HepG2 (cell line): ENCODE measurements at regions of chr10 and their contacts with region 1.

Region 1: DNA sequence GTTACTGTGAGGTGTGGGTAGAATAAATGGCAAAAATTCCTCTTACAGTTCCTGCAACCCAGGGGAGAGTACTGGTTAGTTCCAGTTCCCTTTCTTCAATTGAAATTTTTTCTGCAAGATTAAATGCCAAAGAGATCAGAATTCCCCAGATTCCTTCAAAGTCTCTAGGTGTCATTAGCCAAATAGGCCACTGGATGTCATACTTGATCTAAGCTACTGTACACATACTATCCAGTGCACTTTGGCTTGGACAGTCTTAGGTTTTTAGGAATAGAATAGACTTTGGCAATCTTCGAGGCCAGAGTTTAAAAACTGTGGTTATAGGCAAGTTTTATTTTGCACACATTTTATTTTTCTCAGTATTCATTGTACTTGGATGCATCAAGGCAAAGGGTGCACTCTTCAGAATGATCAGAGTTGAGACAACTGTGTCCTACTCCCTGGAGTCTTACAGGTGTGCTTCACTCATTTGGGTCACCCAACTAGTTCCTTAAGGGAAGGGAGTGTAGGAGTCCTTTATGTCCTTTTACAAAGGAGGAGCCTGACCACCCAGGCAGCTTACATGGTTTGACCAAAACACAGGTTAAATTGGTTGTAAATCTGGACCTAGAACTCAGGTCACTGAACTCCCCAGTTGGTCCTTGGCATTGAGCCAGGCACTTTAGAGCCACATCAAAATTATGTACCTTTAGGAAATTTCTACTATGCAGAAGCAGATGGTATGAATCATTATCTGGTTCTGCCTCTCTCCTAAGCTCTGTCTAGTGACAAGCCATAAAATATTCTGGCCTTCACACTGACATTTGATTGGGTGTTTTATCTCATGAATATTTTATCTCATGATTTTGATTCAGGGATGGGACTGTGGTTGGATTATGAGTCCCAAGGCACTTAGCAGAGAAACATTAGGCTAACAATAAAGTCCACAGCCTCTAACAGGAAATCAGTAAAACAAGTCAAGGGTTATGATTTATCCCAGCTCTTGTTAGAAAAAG is 49.5 kb downstream of the ASAH2B start:
- DNase-seq: peak; percentile 55
- ATAC-seq: peak; percentile 98
- H3K4me3 ChIP-seq: no peak overlapping the region
- H3K27ac ChIP-seq: no peak overlapping the region
- H3K4me1 ChIP-seq: peaks cover 22% of the 10 kb centered on the region
- H3K27me3 ChIP-seq: no peaks in the 10 kb centered on the region
- CTCF ChIP-seq: peak; percentile 81
- EP300 ChIP-seq: no peak
- POLR2A ChIP-seq: no peak
- RAD21 ChIP-seq: peak; percentile 76

Region 2: DNA sequence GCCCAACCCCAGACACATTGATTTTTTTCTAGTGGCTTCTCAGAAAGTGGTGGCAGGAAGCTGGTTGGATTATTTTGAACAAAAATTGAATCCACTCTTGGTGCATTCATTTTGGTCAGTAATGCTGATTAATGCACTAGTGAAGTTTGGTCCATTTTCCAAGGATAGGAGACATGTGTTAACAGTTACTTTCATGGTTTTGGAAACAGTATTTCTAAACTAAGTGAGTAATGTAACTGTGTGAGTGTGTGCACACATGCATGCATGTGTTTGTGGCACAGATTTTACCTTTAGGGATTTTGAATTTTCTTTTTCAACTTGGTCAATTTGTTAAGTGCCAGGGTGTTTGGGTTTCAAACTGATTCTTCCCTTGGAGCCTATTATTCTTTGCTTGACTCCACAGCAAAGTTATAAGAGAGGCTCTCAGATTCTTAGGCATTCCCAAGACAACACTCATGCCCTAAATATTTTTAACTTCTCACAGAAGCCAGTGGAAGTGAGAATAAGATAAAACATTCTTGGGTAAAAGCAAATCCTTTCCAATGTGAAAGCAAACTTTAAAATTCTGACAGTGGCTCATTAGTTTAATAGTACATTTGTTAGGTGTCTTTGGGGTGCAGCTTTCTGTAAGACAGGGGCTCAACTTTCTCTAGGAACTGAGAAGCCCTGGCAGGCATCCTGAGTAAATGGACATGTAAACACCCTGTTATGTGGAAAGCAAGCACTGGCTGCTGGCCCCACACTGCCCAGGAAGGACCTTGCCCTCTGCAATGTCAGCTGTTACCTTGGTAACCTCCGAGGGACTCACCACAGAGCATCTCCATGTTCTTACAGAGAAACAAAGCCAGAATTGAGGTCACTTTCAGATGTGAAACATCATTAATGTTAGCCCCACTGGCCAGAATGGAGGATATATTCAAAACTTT is 18.9 kb after region 1 on chr10:
- CTCF ChIA-PET with region 1: no interaction called
- POLR2A ChIA-PET with region 1: no interaction called
- in situ Hi-C with region 1: no loop called
- intact Hi-C with region 1: loop called (anchors 2 kb)
- DNase-seq: peak; percentile 88
- ATAC-seq: peak; percentile 100
- H3K4me3 ChIP-seq: no peak overlapping the region
- H3K27ac ChIP-seq: peak overlapping the region; percentile 71
- H3K4me1 ChIP-seq: peaks cover 24% of the 10 kb centered on the region
- H3K27me3 ChIP-seq: no peaks in the 10 kb centered on the region
- CTCF ChIP-seq: no peak
- EP300 ChIP-seq: peak; percentile 56 to 64; a peak in 3 of 4 replicates
- POLR2A ChIP-seq: no peak
- RAD21 ChIP-seq: no peak

Region 3: GRCh38 chr10:50885097-50885859 is 96.0 kb after region 1 on chr10 and contains the start of gene A1CF:
- CTCF ChIA-PET with region 1: interaction called, 11 read pairs
- POLR2A ChIA-PET with region 1: no interaction called
- in situ Hi-C with region 1: loop called (anchors 5 kb)
- intact Hi-C with region 1: no loop called
- DNase-seq: peak; percentile 89
- ATAC-seq: peak; percentile 87
- H3K4me3 ChIP-seq: peak within 1 kb of the TSS; percentile 74 to 85 (median 81)
- H3K27ac ChIP-seq: peak within 1 kb of the TSS; percentile 95
- H3K4me1 ChIP-seq: peaks cover 44% of the 10 kb centered on the region
- H3K27me3 ChIP-seq: no peaks in the 10 kb centered on the region
- CTCF ChIP-seq: no peak
- EP300 ChIP-seq: peak in 1 of 2 experiments; percentile 69; a peak in 1 of 4 replicates
- POLR2A ChIP-seq: peak; percentile 68 to 91
- RAD21 ChIP-seq: no peak
- total RNA-seq, gene A1CF: 58.1 and 102 TPM in 2 replicates

Region 4: DNA sequence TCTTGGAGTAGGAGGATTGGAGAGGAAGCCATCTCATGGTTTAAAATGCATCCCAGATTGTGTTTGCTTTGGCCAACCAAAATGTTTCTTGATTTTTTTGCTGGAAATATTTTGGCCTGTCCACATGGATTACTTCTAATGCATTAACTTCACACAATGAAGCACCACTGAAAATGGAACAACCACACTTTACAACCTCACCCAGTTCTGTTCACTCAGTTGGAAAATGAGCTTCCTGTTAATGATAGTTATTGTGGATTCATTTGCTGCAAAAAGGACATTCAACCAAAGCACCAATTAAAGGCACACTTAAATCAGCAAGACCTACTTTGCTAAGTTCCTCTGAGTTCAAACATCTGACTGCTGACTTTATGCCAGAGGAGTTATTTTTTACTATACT is 107.5 kb after region 1 on chr10:
- CTCF ChIA-PET with region 1: interaction called, 11 read pairs
- POLR2A ChIA-PET with region 1: no interaction called
- in situ Hi-C with region 1: loop called (anchors 5 kb)
- intact Hi-C with region 1: loop called (anchors 1 kb)
- DNase-seq: no peak
- ATAC-seq: no peak
- H3K4me3 ChIP-seq: no peak overlapping the region
- H3K27ac ChIP-seq: no peak overlapping the region
- H3K4me1 ChIP-seq: peaks cover 5% of the 10 kb centered on the region; the same call in 1 of the 2 replicates
- H3K27me3 ChIP-seq: no peaks in the 10 kb centered on the region
- CTCF ChIP-seq: no peak
- EP300 ChIP-seq: no peak
- POLR2A ChIP-seq: no peak
- RAD21 ChIP-seq: no peak

Region 5: GRCh38 chr10:50937230-50937907 is 148.1 kb after region 1 on chr10:
- CTCF ChIA-PET with region 1: no interaction called
- POLR2A ChIA-PET with region 1: no interaction called
- in situ Hi-C with region 1: no loop called
- intact Hi-C with region 1: loop called (anchors 1 kb)
- DNase-seq: peak; percentile 24
- ATAC-seq: peak; percentile 40; the same call in 1 of the 3 replicates
- H3K4me3 ChIP-seq: no peak overlapping the region
- H3K27ac ChIP-seq: no peak overlapping the region
- H3K4me1 ChIP-seq: no peaks in the 10 kb centered on the region
- H3K27me3 ChIP-seq: no peaks in the 10 kb centered on the region
- CTCF ChIP-seq: peak; percentile 60
- EP300 ChIP-seq: no peak
- POLR2A ChIP-seq: no peak
- RAD21 ChIP-seq: no peak

Region 6: GRCh38 chr10:50990568-50991185 is 201.4 kb after region 1 on chr10:
- CTCF ChIA-PET with region 1: no interaction called
- POLR2A ChIA-PET with region 1: no interaction called
- in situ Hi-C with region 1: loop called (anchors 10 kb)
- intact Hi-C with region 1: loop called (anchors 10 kb)
- DNase-seq: no peak
- ATAC-seq: no peak
- H3K4me3 ChIP-seq: peak overlapping the region in 2 of 3 experiments; percentile 49 to 70; a peak in 3 of 6 replicates
- H3K27ac ChIP-seq: no peak overlapping the region
- H3K4me1 ChIP-seq: 0 out of 2 replicates have a peak, but pooled peaks cover 8% of the 10 kb centered on the region
- H3K27me3 ChIP-seq: peaks cover 6 to 42% of the 10 kb centered on the region in 2 experiments
- CTCF ChIP-seq: no peak
- EP300 ChIP-seq: no peak
- POLR2A ChIP-seq: no peak
- RAD21 ChIP-seq: no peak

Region 7: GRCh38 chr10:51010977-51011376 is 221.7 kb after region 1 on chr10:
- CTCF ChIA-PET with region 1: no interaction called
- POLR2A ChIA-PET with region 1: no interaction called
- in situ Hi-C with region 1: no loop called
- intact Hi-C with region 1: loop called (anchors 1 kb)
- DNase-seq: peak; percentile 27
- ATAC-seq: peak; percentile 64; the same call in 2 of the 3 replicates
- H3K4me3 ChIP-seq: no peak overlapping the region
- H3K27ac ChIP-seq: no peak overlapping the region
- H3K4me1 ChIP-seq: no peaks in the 10 kb centered on the region
- H3K27me3 ChIP-seq: peaks cover 0 to under 1% of the 10 kb centered on the region in 2 experiments; a peak in 2 of 5 replicates
- CTCF ChIP-seq: peak; percentile 66
- EP300 ChIP-seq: no peak
- POLR2A ChIP-seq: no peak
- RAD21 ChIP-seq: no peak